ENCODE measurements at regions of chr9 and their contacts with region 1.

Region 1: GRCh38 chr9:104747558-104748358 is at the start of gene NIPSNAP3A:
- DNase-seq: peak; percentile 85 to 87
- H3K4me3 ChIP-seq: peak within 1 kb of the TSS; percentile 71
- H3K4me3 Mint-ChIP-seq: peak within 1 kb of the TSS; percentile 95
- H3K27ac Mint-ChIP-seq: peak within 1 kb of the TSS; percentile 88
- H3K4me1 ChIP-seq: peaks cover 13% of the 10 kb centered on the region
- H3K4me1 Mint-ChIP-seq: peaks cover 27% of the 10 kb centered on the region
- H3K27me3 ChIP-seq: no peaks in the 10 kb centered on the region
- H3K27me3 Mint-ChIP-seq: no peaks in the 10 kb centered on the region
- CTCF ChIP-seq: peak in 1 of 2 experiments; percentile 11
- total RNA-seq, gene NIPSNAP3A: 15.8 and 19.0 TPM in 2 replicates

Region 2: DNA sequence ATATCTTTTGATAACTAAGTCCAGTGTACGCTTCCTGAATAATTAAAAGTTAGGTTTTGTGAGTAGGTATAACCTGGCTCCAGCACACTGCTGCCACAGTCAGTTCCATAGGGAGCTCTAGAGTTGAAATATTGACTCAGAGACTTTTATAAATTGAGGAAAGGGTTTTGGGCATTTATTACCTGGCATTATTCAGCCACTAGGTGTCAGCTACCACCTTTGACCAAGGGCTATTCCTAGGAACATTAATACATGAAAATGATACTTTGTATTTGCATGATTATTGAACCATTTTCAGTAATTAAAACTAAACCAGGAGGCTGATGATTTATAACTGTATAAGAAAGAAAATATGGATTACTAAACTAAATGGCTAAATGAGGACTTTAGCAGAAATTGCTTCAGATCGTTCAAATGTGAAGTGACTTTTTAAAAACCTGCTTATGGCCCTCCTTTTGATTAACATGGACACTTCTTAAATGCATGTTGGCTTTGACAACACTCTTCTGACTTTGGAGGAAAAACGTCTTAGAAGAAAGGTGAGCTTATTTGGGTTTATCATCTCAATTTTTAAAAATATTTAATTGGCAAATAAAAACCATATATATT is 570.7 kb before region 1 on chr9:
- CTCF ChIA-PET with region 1: no interaction called
- POLR2A ChIA-PET with region 1: no interaction called
- intact Hi-C with region 1: loop called (anchors 1 kb)
- DNase-seq: peak in 1 of 2 experiments; percentile 7
- H3K4me3 ChIP-seq: no peak overlapping the region
- H3K4me3 Mint-ChIP-seq: no peak overlapping the region
- H3K27ac Mint-ChIP-seq: no peak overlapping the region
- H3K4me1 ChIP-seq: no peaks in the 10 kb centered on the region
- H3K4me1 Mint-ChIP-seq: no peaks in the 10 kb centered on the region
- H3K27me3 ChIP-seq: no peaks in the 10 kb centered on the region
- H3K27me3 Mint-ChIP-seq: no peaks in the 10 kb centered on the region
- CTCF ChIP-seq: peak; percentile 34 to 36

Region 3: GRCh38 chr9:104494808-104495207 is 252.9 kb before region 1 on chr9:
- CTCF ChIA-PET with region 1: interaction called, 3 read pairs
- POLR2A ChIA-PET with region 1: no interaction called
- intact Hi-C with region 1: loop called (anchors 1 kb)
- DNase-seq: no peak
- H3K4me3 ChIP-seq: no peak overlapping the region
- H3K4me3 Mint-ChIP-seq: no peak overlapping the region
- H3K27ac Mint-ChIP-seq: no peak overlapping the region
- H3K4me1 ChIP-seq: no peaks in the 10 kb centered on the region
- H3K4me1 Mint-ChIP-seq: no peaks in the 10 kb centered on the region
- H3K27me3 ChIP-seq: no peaks in the 10 kb centered on the region
- H3K27me3 Mint-ChIP-seq: no peaks in the 10 kb centered on the region
- CTCF ChIP-seq: no peak

Region 4: GRCh38 chr9:104682642-104683041 is 65.1 kb before region 1 on chr9:
- CTCF ChIA-PET with region 1: interaction called, 4 read pairs
- POLR2A ChIA-PET with region 1: no interaction called
- intact Hi-C with region 1: loop called (anchors 1 kb)
- DNase-seq: peak in 1 of 2 experiments; percentile 37
- H3K4me3 ChIP-seq: no peak overlapping the region
- H3K4me3 Mint-ChIP-seq: no peak overlapping the region
- H3K27ac Mint-ChIP-seq: no peak overlapping the region
- H3K4me1 ChIP-seq: no peaks in the 10 kb centered on the region; the same call in 1 of the 2 replicates
- H3K4me1 Mint-ChIP-seq: no peaks in the 10 kb centered on the region
- H3K27me3 ChIP-seq: no peaks in the 10 kb centered on the region
- H3K27me3 Mint-ChIP-seq: no peaks in the 10 kb centered on the region
- CTCF ChIP-seq: peak; percentile 31 to 53

Region 5: GRCh38 chr9:104765138-104765537 is 17.4 kb after region 1 on chr9:
- CTCF ChIA-PET with region 1: no interaction called
- POLR2A ChIA-PET with region 1: no interaction called
- intact Hi-C with region 1: loop called (anchors 2 kb)
- DNase-seq: no peak
- H3K4me3 ChIP-seq: no peak overlapping the region
- H3K4me3 Mint-ChIP-seq: peak overlapping the region; percentile 90
- H3K27ac Mint-ChIP-seq: no peak overlapping the region
- H3K4me1 ChIP-seq: no peaks in the 10 kb centered on the region
- H3K4me1 Mint-ChIP-seq: no peaks in the 10 kb centered on the region
- H3K27me3 ChIP-seq: no peaks in the 10 kb centered on the region
- H3K27me3 Mint-ChIP-seq: no peaks in the 10 kb centered on the region
- CTCF ChIP-seq: no peak

Measured in Caco-2 (cell line).